ENCODE measurements at regions of chr15 and their contacts with region 1.

Region 1: DNA sequence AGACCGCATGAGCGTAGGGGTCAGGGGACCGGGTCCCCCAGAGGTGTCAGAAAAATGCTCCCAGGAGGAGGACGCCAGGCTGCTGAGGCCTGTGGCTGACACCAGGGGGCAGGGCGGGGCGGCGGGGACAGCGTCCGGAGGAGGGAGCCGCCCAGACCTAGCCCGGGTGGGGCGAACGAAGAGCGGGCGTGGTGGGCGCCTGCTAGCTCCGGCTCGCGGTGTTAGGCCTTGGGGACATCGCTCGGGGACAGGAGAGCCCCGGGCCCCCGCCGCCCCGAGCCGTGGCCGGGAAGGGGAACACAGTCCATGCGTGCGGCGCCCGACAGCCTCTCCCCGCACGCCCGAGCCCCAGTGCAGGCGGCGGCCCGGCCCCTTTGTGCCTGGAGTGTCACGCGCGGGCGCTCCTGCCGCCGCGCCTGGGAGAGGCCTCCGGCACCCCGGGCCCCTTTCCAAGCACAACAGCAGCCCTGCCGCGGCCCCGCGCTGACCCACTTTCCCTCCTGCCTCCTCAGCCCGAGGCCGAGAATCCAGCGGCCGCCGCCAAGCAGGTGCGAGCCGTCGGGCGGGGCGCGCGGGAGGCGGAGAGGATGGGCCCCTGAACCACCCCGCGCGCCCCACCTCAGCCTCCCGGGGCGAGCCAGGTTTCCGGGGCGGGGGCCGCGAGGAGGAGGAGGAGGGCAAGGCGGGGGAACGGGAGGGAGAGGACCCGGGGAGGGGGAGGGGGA is 111.0 kb upstream of the KLF13 start:
- DNase-seq: peak; percentile 86
- ATAC-seq: peak; percentile 80
- H3K4me3 Mint-ChIP-seq: peak overlapping the region; percentile 88
- H3K27ac Mint-ChIP-seq: peak overlapping the region; percentile 93
- H3K4me1 Mint-ChIP-seq: peaks cover 44% of the 10 kb centered on the region
- H3K27me3 Mint-ChIP-seq: no peaks in the 10 kb centered on the region
- CTCF ChIP-seq: no peak

Region 2: DNA sequence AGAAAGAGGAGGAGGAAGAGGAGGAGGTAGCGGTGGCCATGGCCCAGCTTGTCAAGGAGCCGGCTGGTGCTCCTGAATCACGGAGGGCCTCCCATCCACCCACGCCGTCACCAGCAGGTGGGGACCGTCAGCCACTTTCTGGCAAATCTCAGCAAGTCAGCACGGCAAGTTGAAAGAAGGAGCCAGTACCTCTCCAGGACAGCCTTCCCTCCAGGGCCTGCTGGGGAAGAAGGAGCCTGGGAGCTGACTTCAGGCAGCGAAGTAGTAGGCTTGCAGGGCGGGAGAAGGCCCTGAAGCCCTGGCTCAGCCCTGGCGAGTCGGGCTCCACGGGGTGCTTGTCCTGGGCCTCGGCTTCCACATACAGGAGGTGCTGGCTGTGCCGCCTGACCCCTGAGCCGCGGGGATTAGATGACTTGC is 14.9 kb before region 1 on chr15:
- CTCF ChIA-PET with region 1: interaction called, 4 read pairs
- POLR2A ChIA-PET with region 1: interaction called, 11 read pairs
- intact Hi-C with region 1: no loop called
- DNase-seq: peak; percentile 42
- ATAC-seq: peak; percentile 45
- H3K4me3 Mint-ChIP-seq: no peak overlapping the region
- H3K27ac Mint-ChIP-seq: no peak overlapping the region
- H3K4me1 Mint-ChIP-seq: peaks cover 29% of the 10 kb centered on the region
- H3K27me3 Mint-ChIP-seq: no peaks in the 10 kb centered on the region
- CTCF ChIP-seq: no peak

Region 3: DNA sequence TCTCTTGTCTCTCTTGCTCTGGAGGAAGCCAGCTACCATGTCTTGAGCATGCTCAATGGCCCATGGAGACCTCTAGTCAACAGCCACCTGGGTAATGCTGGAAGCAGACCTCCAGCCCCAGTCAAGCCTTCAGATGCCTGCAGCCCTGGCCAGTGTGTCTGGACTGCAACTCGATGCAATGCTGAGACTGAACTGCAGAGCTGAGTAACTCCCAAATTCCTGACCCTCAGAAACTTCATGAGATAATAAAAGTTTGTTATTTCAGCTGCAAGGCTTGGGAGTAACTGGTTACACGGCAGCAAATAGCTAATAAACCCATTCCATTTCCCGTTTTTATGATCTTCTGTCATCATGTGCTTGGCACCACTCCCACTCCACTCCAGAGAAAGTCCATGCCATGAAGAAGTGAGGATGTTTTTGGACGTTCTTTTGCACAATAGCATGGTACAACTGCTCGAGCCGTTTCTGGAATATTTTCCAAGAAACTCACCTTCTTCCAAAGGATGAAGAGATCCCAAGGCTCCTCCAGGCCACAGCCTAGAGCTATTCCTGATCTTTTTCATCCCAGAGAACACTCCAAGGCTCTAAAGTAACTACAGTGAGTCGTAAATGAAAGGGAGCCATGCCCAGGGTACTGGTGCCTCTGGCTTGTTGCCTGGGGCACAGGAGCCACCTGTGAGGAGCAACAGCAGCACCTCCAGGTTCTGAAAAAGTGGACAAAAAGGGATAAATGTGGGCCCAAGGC is 39.0 kb after region 1 on chr15:
- CTCF ChIA-PET with region 1: no interaction called
- POLR2A ChIA-PET with region 1: interaction called, 9 read pairs
- intact Hi-C with region 1: loop called (anchors 2 kb)
- DNase-seq: no peak
- ATAC-seq: no peak
- H3K4me3 Mint-ChIP-seq: no peak overlapping the region
- H3K27ac Mint-ChIP-seq: peak overlapping the region; percentile 77
- H3K4me1 Mint-ChIP-seq: peaks cover 44% of the 10 kb centered on the region
- H3K27me3 Mint-ChIP-seq: no peaks in the 10 kb centered on the region
- CTCF ChIP-seq: no peak

Region 4: DNA sequence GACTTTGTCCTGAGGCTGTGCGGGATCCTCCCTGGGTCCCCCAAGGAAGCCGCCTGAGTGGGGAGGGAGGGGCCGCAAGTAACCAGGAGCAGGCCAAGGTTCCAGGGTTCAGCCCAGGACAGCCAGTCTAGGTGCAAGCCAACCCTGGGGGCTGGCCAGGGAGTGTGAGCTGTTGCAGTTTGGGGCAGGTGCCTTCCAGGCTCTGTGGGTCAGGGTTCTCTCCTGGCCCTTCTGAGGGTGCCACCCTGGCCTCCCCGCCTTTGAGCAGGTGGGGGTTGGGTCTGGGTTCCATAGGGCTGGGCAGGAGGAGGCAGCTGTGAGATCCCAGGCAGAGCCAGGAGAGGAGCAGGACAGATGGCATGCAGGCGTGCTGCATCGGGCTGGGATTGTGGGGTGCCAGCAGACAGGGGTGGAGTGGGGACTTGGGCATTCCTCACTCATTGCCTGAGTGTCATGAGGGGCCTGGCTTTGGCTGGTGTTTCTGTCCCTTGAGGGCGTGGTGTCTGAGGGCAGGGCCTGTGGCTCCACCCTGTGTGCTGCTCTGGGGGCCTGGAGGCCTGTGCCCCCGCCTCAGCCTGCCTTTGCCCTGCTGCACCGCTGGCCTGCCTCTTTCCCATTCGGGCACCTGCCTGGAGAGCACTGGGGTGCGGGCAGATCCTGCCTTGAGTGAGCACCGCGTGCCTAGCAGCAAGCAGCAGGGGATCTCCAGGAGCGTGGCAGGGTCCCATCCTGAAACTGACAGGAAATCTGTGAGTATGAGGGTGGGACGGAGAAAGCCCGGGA is 129.4 kb after region 1 on chr15:
- CTCF ChIA-PET with region 1: interaction called, 4 read pairs
- POLR2A ChIA-PET with region 1: interaction called, 13 read pairs
- intact Hi-C with region 1: loop called (anchors 1 kb)
- DNase-seq: peak; percentile 41
- ATAC-seq: peak; percentile 67
- H3K4me3 Mint-ChIP-seq: peak overlapping the region; percentile 88
- H3K27ac Mint-ChIP-seq: peak overlapping the region; percentile 91
- H3K4me1 Mint-ChIP-seq: peaks cover 100% of the 10 kb centered on the region
- H3K27me3 Mint-ChIP-seq: no peaks in the 10 kb centered on the region
- CTCF ChIP-seq: no peak

Region 5: GRCh38 chr15:31442203-31443111 is 226.8 kb after region 1 on chr15:
- CTCF ChIA-PET with region 1: interaction called, 69 read pairs
- POLR2A ChIA-PET with region 1: interaction called, 18 read pairs
- intact Hi-C with region 1: no loop called
- DNase-seq: no peak
- ATAC-seq: no peak
- H3K4me3 Mint-ChIP-seq: peak overlapping the region; percentile 41
- H3K27ac Mint-ChIP-seq: peak overlapping the region; percentile 20
- H3K4me1 Mint-ChIP-seq: peaks cover 59% of the 10 kb centered on the region
- H3K27me3 Mint-ChIP-seq: no peaks in the 10 kb centered on the region
- CTCF ChIP-seq: no peak